Posterior cingulate gyrus (tissue), 11 donors: ENCODE measurements at regions of chr11 and their contacts with region 1.

Region 1: GRCh38 chr11:124943254-124943616 is 7.4 kb upstream of the HEPACAM start:
- DNase-seq: peak; percentile 54 to 95 (median 74)

Region 2: DNA sequence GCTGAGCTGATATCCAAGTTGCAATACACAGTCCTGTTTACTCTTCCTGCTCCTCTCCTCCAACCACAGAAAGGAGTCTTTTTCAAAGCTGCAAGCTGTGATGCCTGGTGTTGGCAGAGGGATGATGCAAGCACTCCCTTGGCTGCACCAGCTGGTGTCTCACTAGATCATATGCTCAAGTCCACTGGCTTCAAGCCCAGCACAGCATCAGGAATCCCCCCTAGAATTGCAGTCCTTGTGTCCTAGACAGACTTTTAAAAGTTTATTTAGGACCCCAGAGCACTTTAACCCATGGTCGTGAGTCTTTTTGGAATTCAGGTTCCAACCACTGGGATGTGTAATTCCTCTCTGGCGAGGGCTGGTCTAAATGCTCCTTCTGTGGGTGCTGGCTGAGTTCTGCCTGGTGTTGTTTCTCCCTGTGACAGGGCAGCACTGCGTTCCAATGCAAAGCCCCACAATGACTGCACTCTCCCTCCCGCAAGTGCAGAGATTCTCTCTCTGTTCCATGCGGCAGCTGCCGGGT is 26.1 kb before region 1 on chr11:
- intact Hi-C with region 1: loop called (anchors 1 kb)
- DNase-seq: peak in 7 of 10 donors; percentile 60 to 97 (median 70)